ENCODE measurements at regions of chr5 and their contacts with region 1.

Region 1: GRCh38 chr5:43313035-43313853 is at the start of gene HMGCS1:
- DNase-seq: peak; percentile 97 to 99 (median 99)
- H3K4me3 ChIP-seq: peak within 1 kb of the TSS; percentile 77
- H3K4me3 Mint-ChIP-seq: peak within 1 kb of the TSS; percentile 88 to 97 (median 95)
- H3K27ac ChIP-seq: peak within 1 kb of the TSS; percentile 97
- H3K27ac Mint-ChIP-seq: peak within 1 kb of the TSS; percentile 82 to 96 (median 95)
- H3K4me1 ChIP-seq: peaks cover 36% of the 10 kb centered on the region
- H3K4me1 Mint-ChIP-seq: peaks cover 25 to 45% (median 42%) of the 10 kb centered on the region in 3 donors
- H3K27me3 ChIP-seq: no peaks in the 10 kb centered on the region
- H3K27me3 Mint-ChIP-seq: peaks cover 3 to 8% of the 10 kb centered on the region in 2 donors
- total RNA-seq, gene HMGCS1: 70.3 to 75.1 TPM

Region 2: DNA sequence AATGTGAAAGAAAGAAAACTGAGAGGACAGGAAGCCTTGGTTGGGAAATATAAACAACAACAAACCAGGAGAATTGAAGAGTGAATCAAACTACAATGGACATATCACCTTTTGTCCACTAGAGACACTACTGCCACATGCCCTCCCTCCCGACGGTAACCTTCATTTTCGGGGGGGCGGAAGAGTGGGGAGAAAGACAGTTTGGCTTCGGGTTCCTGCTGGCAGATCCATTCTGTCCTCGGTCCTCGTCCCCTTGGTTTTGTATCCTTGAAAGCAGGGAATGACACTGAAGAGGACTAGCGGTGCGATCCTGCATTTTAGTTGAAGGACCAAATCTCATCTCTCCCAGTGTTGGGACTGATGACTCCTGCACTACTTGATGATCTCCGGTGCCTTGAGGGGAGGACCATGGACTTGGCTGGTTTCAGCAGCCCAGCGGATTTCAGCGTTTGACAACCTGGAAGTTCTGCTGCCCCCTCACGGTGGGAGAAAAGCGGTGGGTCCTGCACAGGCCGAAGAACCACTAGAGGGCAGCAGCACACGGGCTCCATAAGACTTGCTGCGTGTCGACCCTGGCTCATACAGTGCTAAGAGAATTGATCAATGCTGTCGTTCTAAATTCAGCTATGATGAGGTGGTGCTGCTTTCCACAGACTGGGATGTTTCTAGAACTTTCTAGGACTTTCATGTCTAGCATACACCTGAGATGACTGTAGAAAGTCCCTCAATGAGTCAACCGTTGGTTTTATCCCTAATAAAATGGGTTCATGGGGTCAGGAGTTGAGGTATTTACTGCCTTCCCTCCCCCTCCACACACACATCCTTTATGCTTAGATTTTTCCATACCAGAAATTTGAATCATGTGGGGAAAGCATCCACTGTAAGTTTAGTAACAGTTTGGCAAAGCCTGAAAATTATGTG is 207.6 kb before region 1 on chr5:
- CTCF ChIA-PET with region 1: interaction called, 11 read pairs
- POLR2A ChIA-PET with region 1: no interaction called
- DNase-seq: peak; percentile 80 to 92 (median 84)
- H3K4me3 ChIP-seq: peak overlapping the region; percentile 74
- H3K4me3 Mint-ChIP-seq: peak overlapping the region; percentile 77 to 91 (median 85)
- H3K27ac ChIP-seq: peak overlapping the region; percentile 19
- H3K27ac Mint-ChIP-seq: peak overlapping the region; percentile 72 to 95 (median 90)
- H3K4me1 ChIP-seq: peaks cover 21% of the 10 kb centered on the region
- H3K4me1 Mint-ChIP-seq: peaks cover 33 to 45% (median 44%) of the 10 kb centered on the region in 3 donors
- H3K27me3 ChIP-seq: no peaks in the 10 kb centered on the region
- H3K27me3 Mint-ChIP-seq: no peaks in the 10 kb centered on the region

Region 3: GRCh38 chr5:43396762-43397304 is 83.6 kb after region 1 on chr5:
- CTCF ChIA-PET with region 1: no interaction called
- POLR2A ChIA-PET with region 1: interaction called, 12 read pairs
- DNase-seq: peak; percentile 26 to 74 (median 58)
- H3K4me3 ChIP-seq: peak overlapping the region; percentile 82
- H3K4me3 Mint-ChIP-seq: peak overlapping the region; percentile 90 to 99 (median 96)
- H3K27ac ChIP-seq: peak overlapping the region; percentile 48
- H3K27ac Mint-ChIP-seq: peak overlapping the region; percentile 57 to 98 (median 93)
- H3K4me1 ChIP-seq: peaks cover 13% of the 10 kb centered on the region
- H3K4me1 Mint-ChIP-seq: peaks cover 26 to 48% (median 43%) of the 10 kb centered on the region in 3 donors
- H3K27me3 ChIP-seq: no peaks in the 10 kb centered on the region
- H3K27me3 Mint-ChIP-seq: peaks cover 4 to 7% of the 10 kb centered on the region in 2 donors

Region 4: DNA sequence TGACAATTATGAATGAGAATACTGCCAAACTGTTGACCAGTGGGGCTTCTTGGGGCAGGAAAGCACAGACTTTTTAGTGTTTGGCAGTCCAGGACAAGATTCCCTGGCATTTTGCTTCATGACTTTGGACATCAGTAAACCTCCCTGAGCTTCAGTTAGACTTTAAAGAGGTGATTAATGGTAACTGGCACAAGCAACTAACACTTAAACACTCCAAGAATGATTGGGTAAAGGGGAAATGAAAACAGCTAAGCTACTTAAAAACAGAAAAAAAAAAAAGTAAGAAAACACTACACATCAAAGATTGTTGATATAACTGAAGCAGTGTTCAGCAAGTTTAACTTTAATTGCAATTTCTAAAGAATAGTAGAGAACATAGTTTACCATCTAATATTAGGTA is 230.2 kb after region 1 on chr5:
- CTCF ChIA-PET with region 1: no interaction called
- POLR2A ChIA-PET with region 1: no interaction called
- DNase-seq: no peak
- H3K4me3 ChIP-seq: no peak overlapping the region
- H3K4me3 Mint-ChIP-seq: no peak overlapping the region
- H3K27ac ChIP-seq: no peak overlapping the region
- H3K27ac Mint-ChIP-seq: peak overlapping the region in 3 of 8 donors; percentile 42 to 61 (median 51)
- H3K4me1 ChIP-seq: no peaks in the 10 kb centered on the region
- H3K4me1 Mint-ChIP-seq: peaks cover 21 to 43% (median 34%) of the 10 kb centered on the region in 3 donors
- H3K27me3 ChIP-seq: no peaks in the 10 kb centered on the region
- H3K27me3 Mint-ChIP-seq: no peaks in the 10 kb centered on the region